Ascending aorta (tissue), 2 donors: ENCODE measurements at regions of chr10 and their contacts with region 1.

Region 1: DNA sequence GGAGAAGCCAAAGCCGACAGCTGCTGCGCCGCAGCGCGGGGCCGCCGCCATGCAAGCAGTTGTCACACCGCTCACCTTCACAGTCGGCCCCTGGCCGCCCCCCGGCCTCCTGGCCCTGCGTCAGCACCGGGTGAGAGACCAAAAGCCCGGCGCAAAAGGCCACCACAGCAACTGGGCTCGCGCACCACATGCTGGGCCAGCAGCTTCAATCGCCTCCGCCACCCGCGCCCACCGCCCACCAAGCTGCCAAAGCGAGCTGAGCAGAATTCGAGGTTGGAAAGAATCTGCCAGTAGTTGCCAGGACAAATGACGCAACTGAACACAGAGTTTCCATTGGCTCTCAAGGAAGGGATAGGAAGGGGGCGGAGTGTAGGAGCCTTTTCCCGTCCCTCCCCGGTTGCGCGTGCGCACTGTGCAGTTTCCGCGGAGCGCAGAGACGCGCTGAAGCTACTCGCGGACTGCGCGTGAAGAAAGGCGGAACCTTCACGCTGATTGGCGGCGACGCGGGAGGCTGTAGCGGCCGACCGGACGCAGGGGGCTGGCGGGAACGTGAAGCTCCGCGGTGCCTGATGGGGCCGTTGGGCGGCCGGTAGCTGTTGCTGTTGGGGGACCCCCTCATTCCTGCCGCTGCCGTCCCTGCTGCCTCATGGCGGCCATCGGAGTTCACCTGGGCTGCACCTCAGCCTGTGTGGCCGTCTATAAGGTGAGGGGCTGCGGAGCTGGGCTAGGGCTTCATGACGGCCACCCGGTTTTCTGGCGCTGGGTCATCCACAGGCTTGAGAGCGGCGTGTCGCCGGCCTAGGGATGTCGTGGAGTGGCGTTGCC is at the starts of genes CDNF, HSPA14 and MSANTD7:
- DNase-seq: peak; percentile 92 to 99
- H3K4me3 ChIP-seq: peak within 1 kb of the TSS; percentile 85 to 86
- H3K27ac ChIP-seq: peak within 1 kb of the TSS; percentile 94 to 97
- H3K4me1 ChIP-seq: peaks cover 0 to 7% of the 10 kb centered on the region in 2 donors
- H3K27me3 ChIP-seq: no peaks in the 10 kb centered on the region
- CTCF ChIP-seq: no peak
- total RNA-seq, gene CDNF: not detected
- total RNA-seq, gene HSPA14: 26.3 TPM
- total RNA-seq, gene MSANTD7: 0.64 TPM

Region 2: DNA sequence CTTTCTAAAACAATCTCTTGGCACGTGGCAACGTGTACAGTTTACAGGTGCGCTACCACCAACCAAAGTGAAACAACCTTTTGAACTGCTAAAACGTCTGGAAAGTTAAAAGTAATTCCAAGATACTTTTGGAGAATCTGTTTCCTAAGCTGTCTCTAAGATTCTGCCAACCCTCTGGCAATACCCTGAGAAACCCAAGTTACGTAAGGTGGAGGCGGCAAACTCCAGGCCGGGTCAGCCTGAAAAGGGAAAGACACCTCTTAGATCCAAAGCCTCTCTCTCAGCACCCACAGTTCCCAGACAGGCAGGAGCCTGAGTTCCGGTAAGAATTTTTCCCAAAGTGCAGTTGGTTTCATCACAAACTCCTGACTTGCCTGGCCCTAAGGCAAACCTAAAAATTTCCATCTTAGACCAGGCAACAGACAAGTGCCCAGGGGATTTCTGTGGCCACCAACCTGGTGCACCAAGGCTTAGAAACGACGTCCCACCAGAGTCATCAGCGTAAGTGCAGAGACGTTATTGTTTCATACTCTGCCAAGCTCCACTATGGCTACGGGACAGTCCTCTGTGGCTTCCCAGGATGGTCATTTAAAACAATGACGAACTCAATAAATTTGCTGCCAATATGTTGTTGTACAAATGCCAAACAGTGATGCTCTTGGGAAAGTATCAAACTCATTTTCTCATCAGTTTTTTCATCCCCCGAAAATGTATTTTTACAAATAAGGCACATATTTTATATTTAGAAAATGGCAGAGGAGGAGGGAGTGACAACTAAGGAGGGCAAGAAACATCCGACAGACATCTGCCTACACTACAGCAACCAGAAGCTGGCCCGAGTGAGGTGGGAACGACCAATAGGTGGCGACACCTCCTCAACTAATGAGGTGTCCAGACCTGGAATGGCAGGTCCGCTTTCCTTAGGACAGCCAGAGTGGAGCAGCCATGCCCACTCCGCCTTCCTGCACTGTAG is 301.4 kb before region 1 on chr10:
- intact Hi-C with region 1: loop called (anchors 5 kb)
- DNase-seq: peak in 1 of 2 donors; percentile 80
- H3K4me3 ChIP-seq: peak overlapping the region in 1 of 2 donors; percentile 46
- H3K27ac ChIP-seq: peak overlapping the region; percentile 28 to 42
- H3K4me1 ChIP-seq: no peaks in the 10 kb centered on the region
- H3K27me3 ChIP-seq: no peaks in the 10 kb centered on the region
- CTCF ChIP-seq: peak; percentile 39 to 56 (median 55)

Region 3: GRCh38 chr10:14648005-14648765 is 189.8 kb before region 1 on chr10:
- intact Hi-C with region 1: loop called (anchors 2 kb)
- DNase-seq: peak; percentile 55 to 89
- H3K4me3 ChIP-seq: peak overlapping the region in 1 of 2 donors; percentile 25
- H3K27ac ChIP-seq: peak overlapping the region; percentile 68 to 80
- H3K4me1 ChIP-seq: peaks cover 1 to 7% of the 10 kb centered on the region in 2 donors
- H3K27me3 ChIP-seq: no peaks in the 10 kb centered on the region
- CTCF ChIP-seq: no peak

Region 4: DNA sequence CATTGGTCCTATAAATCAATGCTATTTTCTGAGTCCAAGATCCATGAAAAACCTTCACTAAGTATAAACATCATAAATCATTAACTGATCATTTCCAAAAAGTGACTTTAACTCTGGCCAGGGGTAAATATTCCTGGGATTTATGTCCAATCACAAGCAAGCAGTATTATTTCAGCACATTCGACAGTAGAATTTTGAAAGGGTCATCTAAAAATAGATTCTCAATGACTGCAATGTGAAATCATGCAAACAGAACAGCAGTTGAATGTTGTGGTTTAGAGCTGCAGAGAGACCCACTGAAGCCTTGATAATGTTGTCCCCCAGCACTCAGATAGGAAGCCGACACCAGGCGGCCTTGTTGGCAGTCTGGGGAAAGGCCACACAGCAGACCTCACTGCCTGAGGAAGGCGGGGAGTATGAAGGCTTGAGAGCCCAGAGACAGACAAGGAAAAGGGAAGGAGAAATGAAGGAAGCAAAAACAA is 101.3 kb before region 1 on chr10:
- intact Hi-C with region 1: loop called (anchors 2 kb)
- DNase-seq: no peak
- H3K4me3 ChIP-seq: no peak overlapping the region
- H3K27ac ChIP-seq: peak overlapping the region; percentile 82 to 87
- H3K4me1 ChIP-seq: peaks cover 13 to 38% of the 10 kb centered on the region in 2 donors
- H3K27me3 ChIP-seq: no peaks in the 10 kb centered on the region
- CTCF ChIP-seq: no peak

Region 5: DNA sequence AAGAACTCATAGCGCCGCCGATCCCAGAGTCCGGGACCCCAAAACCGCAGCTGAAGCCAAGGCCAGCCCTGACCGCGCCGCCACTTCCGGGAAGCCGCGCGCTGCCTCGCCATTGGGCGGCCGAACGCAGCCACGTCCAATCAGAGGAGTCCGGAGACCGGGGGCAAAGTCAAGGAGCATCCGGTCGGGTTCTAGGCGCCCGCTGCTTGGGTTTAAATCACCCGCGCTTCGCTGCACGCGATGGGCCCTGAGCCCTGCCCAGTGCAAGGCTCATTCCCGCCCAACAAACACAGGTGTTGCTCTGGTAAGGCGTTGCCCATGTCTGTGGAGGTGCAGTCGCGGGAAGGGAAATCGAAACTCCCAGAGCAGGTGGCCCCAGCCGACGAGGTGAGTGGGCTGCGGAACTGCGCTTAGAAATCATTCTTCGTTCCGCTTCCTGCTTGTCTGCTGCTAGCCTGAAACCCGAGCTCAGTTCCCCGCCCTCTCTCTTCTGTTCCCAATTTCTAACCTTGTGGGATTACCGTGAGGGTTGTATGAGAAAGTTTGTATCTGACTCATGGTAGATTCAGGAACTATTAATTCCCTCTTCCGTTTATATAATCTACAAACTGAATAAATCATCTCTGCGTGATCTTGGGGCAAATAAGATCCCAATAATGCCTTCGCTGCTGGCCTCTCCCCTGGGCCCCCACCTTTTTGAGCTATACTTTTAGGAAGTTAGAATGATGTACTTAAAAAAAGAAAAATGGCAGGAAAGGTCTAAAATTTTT is 116.2 kb after region 1 on chr10 and contains the start of gene DCLRE1C:
- intact Hi-C with region 1: loop called (anchors 1 kb)
- DNase-seq: peak; percentile 53 to 94
- H3K4me3 ChIP-seq: peak within 1 kb of the TSS; percentile 87 to 92
- H3K27ac ChIP-seq: peak within 1 kb of the TSS; percentile 89 to 91
- H3K4me1 ChIP-seq: peaks cover 4 to 11% of the 10 kb centered on the region in 2 donors
- H3K27me3 ChIP-seq: no peaks in the 10 kb centered on the region
- CTCF ChIP-seq: no peak
- total RNA-seq, gene DCLRE1C: 8.6 TPM

Region 6: GRCh38 chr10:15035385-15036301 is 197.7 kb after region 1 on chr10:
- intact Hi-C with region 1: no loop called
- DNase-seq: no peak
- H3K4me3 ChIP-seq: no peak overlapping the region
- H3K27ac ChIP-seq: no peak overlapping the region
- H3K4me1 ChIP-seq: no peaks in the 10 kb centered on the region
- H3K27me3 ChIP-seq: no peaks in the 10 kb centered on the region
- CTCF ChIP-seq: no peak

Region 7: GRCh38 chr10:15168781-15169554 is 331.0 kb after region 1 on chr10:
- intact Hi-C with region 1: loop called (anchors 1 kb)
- DNase-seq: peak; percentile 69 to 96
- H3K4me3 ChIP-seq: peak overlapping the region in 1 of 2 donors; percentile 36
- H3K27ac ChIP-seq: peak overlapping the region in 1 of 2 donors; percentile 15
- H3K4me1 ChIP-seq: no peaks in the 10 kb centered on the region
- H3K27me3 ChIP-seq: no peaks in the 10 kb centered on the region
- CTCF ChIP-seq: no peak

Region 8: DNA sequence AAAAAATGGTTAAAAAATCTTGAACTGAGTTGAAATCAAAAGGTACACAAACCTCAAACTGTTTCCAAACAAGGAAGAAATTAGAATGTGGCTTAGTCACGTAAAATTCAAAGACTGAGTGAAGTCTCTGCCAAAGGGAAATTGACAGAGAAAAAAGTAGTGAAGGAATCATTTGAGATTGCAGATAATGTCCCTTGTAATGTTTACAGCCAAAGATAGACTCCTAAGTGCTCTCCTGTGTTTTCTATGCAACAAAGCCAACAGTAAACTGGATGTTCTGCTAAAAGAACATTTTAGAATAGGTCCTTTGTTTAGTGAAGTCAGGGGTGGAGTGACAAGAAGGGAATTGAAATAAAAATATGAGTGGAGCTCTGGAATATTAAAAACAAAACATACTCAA is 763.9 kb after region 1 on chr10:
- intact Hi-C with region 1: no loop called
- DNase-seq: no peak
- H3K4me3 ChIP-seq: no peak overlapping the region
- H3K27ac ChIP-seq: peak overlapping the region; percentile 46 to 70
- H3K4me1 ChIP-seq: peaks cover 6 to 17% of the 10 kb centered on the region in 2 donors
- H3K27me3 ChIP-seq: no peaks in the 10 kb centered on the region
- CTCF ChIP-seq: no peak